ENCODE measurements at regions of chr12 and their contacts with region 1.

Region 1: GRCh38 chr12:21169878-21170472 is 39.0 kb downstream of the SLCO1B1 start:
- DNase-seq: peak; percentile 28
- H3K4me3 ChIP-seq: no peak overlapping the region
- CTCF ChIP-seq: peak; percentile 82

Region 2: DNA sequence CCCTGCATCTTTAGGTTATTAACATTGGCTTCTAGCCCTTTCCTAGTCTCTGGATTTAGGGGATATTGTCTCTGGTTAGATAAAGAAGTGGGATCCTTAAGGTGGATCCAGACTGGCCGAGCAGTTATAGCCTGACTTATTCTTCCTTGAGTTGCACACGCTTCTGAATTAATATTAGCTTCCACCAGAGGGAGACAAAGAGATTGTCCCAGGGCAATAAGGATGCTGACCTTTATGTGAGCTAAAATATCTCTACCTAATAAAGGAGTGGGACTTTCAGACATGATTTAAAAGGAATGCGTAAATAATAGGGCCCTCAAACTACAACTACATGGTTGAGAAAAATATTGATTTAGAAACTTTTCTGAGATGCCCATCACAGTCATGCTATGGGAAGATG is 219.7 kb before region 1 on chr12:
- in situ Hi-C with region 1: loop called (anchors 10 kb)
- DNase-seq: peak; percentile 24
- H3K4me3 ChIP-seq: no peak overlapping the region
- CTCF ChIP-seq: peak; percentile 57

Region 3: DNA sequence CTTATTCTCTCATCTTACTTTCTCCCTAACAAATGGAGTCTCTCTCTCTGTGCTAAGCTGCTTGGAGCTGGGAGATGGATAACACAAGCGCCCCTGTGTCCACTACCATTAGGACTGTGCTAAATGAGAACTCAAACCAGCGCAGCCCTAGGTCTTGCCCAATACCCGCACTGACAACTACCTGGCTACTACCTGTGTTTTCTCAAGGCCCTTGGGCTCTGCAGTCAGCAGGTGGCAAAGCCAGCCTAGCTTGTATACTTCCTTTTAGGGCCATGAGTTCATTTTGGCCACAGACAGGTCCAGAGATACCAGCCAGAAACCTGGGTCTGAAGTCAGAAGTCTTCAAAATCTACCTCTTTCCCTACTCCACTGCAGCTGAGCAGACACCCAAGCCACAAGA is 52.0 kb before region 1 on chr12:
- in situ Hi-C with region 1: no loop called
- DNase-seq: no peak
- H3K4me3 ChIP-seq: no peak overlapping the region
- CTCF ChIP-seq: no peak